HepG2 (cell line): ENCODE measurements at regions of chr12 and their contacts with region 1.

Region 1: GRCh38 chr12:46492471-46493351 is 120.1 kb upstream of the SLC38A2 start:
- DNase-seq: peak; percentile 100
- ATAC-seq: peak; percentile 89
- H3K4me3 ChIP-seq: peak overlapping the region in 2 of 3 experiments; percentile 39 to 45; a peak in 3 of 6 replicates
- H3K27ac ChIP-seq: peak overlapping the region; percentile 96
- H3K4me1 ChIP-seq: peaks cover 81% of the 10 kb centered on the region
- H3K27me3 ChIP-seq: no peaks in the 10 kb centered on the region
- CTCF ChIP-seq: 0 out of 2 replicates have a peak, but pooled peaks have one; percentile 6
- EP300 ChIP-seq: peak; percentile 96 to 100
- POLR2A ChIP-seq: peak in 1 of 2 experiments; percentile 38; a peak in 1 of 4 replicates
- RAD21 ChIP-seq: 0 out of 2 replicates have a peak, but pooled peaks have one; percentile 8

Region 2: DNA sequence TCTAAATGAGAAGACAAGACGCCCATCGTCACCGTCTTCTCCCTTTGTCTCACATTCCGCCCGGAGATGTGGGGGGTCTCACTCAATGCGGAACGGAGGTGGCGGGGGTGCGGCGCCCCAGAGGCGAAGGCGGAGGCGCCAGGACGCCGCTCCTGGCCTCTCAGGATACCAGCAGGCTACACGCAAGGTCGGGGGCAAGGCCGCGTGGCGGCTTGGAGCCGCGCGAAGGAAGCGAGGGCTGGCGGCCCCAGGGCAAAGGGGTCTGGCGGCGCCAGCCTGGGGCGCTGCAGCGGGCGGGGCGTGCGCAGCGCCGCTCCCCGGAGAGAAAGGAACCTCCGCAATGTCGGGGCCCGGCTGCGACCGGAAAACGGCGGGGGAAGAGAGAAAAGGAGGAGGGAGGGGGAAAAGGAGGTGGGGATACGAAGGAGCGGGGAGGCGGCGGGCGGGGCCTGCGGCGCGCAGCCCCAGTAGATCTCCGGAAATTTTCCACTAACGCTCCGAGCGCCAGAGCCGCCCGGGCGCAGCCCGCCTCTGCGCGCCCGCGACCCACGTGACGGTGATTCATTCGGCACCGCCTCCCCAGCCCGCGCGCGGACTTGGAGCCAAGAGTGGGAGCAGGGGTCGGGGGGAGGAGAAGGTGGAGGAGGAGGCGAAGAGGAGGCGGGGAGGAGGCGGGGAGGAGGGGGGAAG is 109.6 kb before region 1 on chr12:
- CTCF ChIA-PET with region 1: no interaction called
- POLR2A ChIA-PET with region 1: interaction called, 31 read pairs
- in situ Hi-C with region 1: no loop called
- intact Hi-C with region 1: loop called (anchors 2 kb)
- DNase-seq: peak; percentile 93
- ATAC-seq: peak; percentile 87
- H3K4me3 ChIP-seq: peak overlapping the region; percentile 67 to 90 (median 73); a peak in 5 of 6 replicates
- H3K27ac ChIP-seq: peak overlapping the region; percentile 98
- H3K4me1 ChIP-seq: peaks cover 68% of the 10 kb centered on the region
- H3K27me3 ChIP-seq: no peaks in the 10 kb centered on the region; a peak in 1 of 5 replicates
- CTCF ChIP-seq: peak; percentile 60
- EP300 ChIP-seq: peak; percentile 39 to 86; a peak in 2 of 4 replicates
- POLR2A ChIP-seq: peak in 1 of 2 experiments; percentile 65; a peak in 2 of 4 replicates
- RAD21 ChIP-seq: peak; percentile 72

Region 3: GRCh38 chr12:46473634-46474329 is 18.9 kb before region 1 on chr12:
- CTCF ChIA-PET with region 1: no interaction called
- POLR2A ChIA-PET with region 1: interaction called, 16 read pairs
- in situ Hi-C with region 1: no loop called
- intact Hi-C with region 1: no loop called
- DNase-seq: peak; percentile 95
- ATAC-seq: peak; percentile 97
- H3K4me3 ChIP-seq: peak overlapping the region; percentile 14 to 40 (median 17); a peak in 4 of 6 replicates
- H3K27ac ChIP-seq: peak overlapping the region; percentile 89
- H3K4me1 ChIP-seq: peaks cover 93% of the 10 kb centered on the region
- H3K27me3 ChIP-seq: no peaks in the 10 kb centered on the region
- CTCF ChIP-seq: no peak
- EP300 ChIP-seq: peak in 1 of 2 experiments; percentile 98; a peak in 2 of 4 replicates
- POLR2A ChIP-seq: no peak
- RAD21 ChIP-seq: no peak

Region 4: GRCh38 chr12:46556105-46556559 is 63.4 kb after region 1 on chr12:
- CTCF ChIA-PET with region 1: no interaction called
- POLR2A ChIA-PET with region 1: no interaction called
- in situ Hi-C with region 1: no loop called
- intact Hi-C with region 1: loop called (anchors 5 kb)
- DNase-seq: peak; percentile 87
- ATAC-seq: no peak; the same call in 1 of the 3 replicates
- H3K4me3 ChIP-seq: no peak overlapping the region
- H3K27ac ChIP-seq: no peak overlapping the region
- H3K4me1 ChIP-seq: peaks cover 26% of the 10 kb centered on the region
- H3K27me3 ChIP-seq: no peaks in the 10 kb centered on the region
- CTCF ChIP-seq: no peak
- EP300 ChIP-seq: peak in 1 of 2 experiments; percentile 68; a peak in 1 of 4 replicates
- POLR2A ChIP-seq: no peak
- RAD21 ChIP-seq: no peak

Region 5: DNA sequence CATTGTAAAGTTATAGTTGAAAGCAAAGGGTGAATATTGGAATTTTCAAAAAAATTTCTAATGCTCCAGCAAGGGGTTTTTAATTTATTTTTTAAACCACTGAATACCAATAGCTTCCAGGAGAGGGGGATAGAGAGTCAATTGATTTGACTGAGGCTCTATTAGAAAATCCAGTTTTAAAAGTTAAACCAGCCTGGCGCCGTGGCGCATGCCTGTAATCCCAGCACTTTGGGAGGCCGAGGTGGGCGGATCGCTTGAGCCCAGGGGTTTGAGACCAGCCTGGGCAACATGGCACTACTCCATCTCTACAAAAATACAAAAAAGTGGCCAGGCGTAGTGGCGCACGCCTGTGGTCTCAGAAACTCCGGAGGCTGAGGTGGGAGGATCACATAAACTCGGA is 183.0 kb after region 1 on chr12:
- CTCF ChIA-PET with region 1: no interaction called
- POLR2A ChIA-PET with region 1: no interaction called
- in situ Hi-C with region 1: no loop called
- intact Hi-C with region 1: loop called (anchors 5 kb)
- DNase-seq: peak; percentile 30
- ATAC-seq: no peak
- H3K4me3 ChIP-seq: no peak overlapping the region
- H3K27ac ChIP-seq: no peak overlapping the region
- H3K4me1 ChIP-seq: peaks cover 26% of the 10 kb centered on the region
- H3K27me3 ChIP-seq: no peaks in the 10 kb centered on the region
- CTCF ChIP-seq: peak; percentile 30; the same call in 1 of the 2 replicates
- EP300 ChIP-seq: no peak
- POLR2A ChIP-seq: no peak
- RAD21 ChIP-seq: peak; percentile 45